MCF 10A (cell line): ENCODE measurements at regions of chr4 and their contacts with region 1.

Region 1: GRCh38 chr4:6768539-6768905 is 14.0 kb upstream of the KIAA0232 start:
- DNase-seq: peak; percentile 66
- H3K4me3 Mint-ChIP-seq: no peak overlapping the region
- H3K27ac Mint-ChIP-seq: peak overlapping the region; percentile 42
- H3K4me1 Mint-ChIP-seq: peaks cover 48% of the 10 kb centered on the region
- H3K27me3 Mint-ChIP-seq: no peaks in the 10 kb centered on the region
- CTCF ChIP-seq: no peak

Region 2: DNA sequence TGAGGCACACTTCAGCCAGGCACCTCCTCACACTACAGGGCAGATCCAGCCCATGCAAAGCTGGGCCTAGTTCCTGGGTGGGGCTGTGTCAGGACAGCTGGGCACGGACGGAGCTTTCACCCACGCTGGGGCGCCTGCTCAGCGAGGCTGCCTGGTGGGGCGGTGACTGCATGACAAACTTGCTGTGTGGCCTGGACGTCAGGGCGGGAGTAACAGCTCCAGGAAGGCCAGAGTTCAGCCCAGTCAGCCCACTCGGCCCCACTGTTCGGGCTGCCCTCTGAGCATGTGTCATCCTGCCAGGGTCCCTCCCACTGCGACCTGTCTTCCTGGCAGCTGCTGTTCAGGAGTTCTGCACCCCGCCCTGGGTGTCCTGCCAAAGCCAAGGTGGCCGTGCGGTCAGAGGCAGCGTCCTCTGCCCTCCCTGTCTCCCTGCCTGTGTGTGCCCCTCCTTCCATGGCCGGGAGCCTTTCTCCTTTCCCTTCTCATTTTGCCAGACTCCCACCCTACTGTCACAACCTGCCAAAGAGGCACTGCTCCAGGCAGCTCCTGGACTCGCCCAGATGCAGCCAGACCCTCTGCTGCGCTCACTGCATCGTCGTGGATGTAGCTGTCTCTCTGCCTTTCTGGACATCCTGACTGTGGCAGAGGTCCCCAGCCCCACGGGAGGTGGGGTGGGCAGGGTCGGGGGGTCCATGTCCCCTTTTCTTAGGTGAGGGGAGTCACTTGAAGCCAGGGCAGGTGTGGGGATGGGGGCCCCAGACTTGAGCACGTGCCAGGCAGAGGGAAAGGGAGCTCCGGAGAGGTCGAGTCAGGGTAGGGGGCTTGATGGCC is 19.0 kb before region 1 on chr4:
- CTCF ChIA-PET with region 1: interaction called, 4 read pairs
- POLR2A ChIA-PET with region 1: interaction called, 15 read pairs
- intact Hi-C with region 1: no loop called
- DNase-seq: peak; percentile 73
- H3K4me3 Mint-ChIP-seq: peak overlapping the region; percentile 41
- H3K27ac Mint-ChIP-seq: peak overlapping the region; percentile 60
- H3K4me1 Mint-ChIP-seq: peaks cover 23% of the 10 kb centered on the region
- H3K27me3 Mint-ChIP-seq: no peaks in the 10 kb centered on the region
- CTCF ChIP-seq: no peak

Region 3: GRCh38 chr4:6783053-6783981 is 14.8 kb after region 1 on chr4:
- CTCF ChIA-PET with region 1: interaction called, 4 read pairs
- POLR2A ChIA-PET with region 1: interaction called, 21 read pairs
- intact Hi-C with region 1: no loop called
- DNase-seq: peak; percentile 88
- H3K4me3 Mint-ChIP-seq: peak overlapping the region; percentile 78
- H3K27ac Mint-ChIP-seq: no peak overlapping the region
- H3K4me1 Mint-ChIP-seq: peaks cover 22% of the 10 kb centered on the region
- H3K27me3 Mint-ChIP-seq: no peaks in the 10 kb centered on the region
- CTCF ChIP-seq: no peak